Heart left ventricle (tissue), 16 donors: ENCODE measurements at regions of chr20 and their contacts with region 1.

Region 1: DNA sequence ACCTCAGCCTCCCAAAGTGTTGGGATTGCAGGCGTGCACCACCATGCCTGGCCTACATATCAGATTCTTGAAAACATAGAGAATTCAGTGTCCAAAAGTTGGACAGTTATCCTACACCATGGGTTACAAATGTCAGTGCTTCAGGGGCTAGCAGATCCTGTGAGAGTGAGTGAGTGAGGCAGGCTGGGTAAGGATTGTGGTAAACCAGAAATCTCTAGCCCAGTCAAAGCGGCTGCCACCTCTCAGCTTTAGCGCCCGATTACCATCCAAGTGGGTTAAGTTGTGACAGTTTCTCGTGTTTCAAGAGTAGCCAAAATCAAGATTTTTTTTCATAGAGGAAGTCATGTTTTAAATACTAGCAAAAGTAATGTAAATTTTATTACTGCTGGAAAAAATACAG is 21.9 kb upstream of the CSE1L start:
- DNase-seq: no peak
- ATAC-seq: no peak
- H3K4me3 ChIP-seq: no peak overlapping the region
- H3K27ac ChIP-seq: no peak overlapping the region
- H3K4me1 ChIP-seq: no peaks in the 10 kb centered on the region
- H3K27me3 ChIP-seq: no peaks in the 10 kb centered on the region
- CTCF ChIP-seq: no peak
- POLR2A ChIP-seq: no peak

Region 2: GRCh38 chr20:49063279-49063678 is 39.1 kb after region 1 on chr20:
- intact Hi-C with region 1: loop called in 1 of 10 experiments (anchors 2 kb)
- DNase-seq: no peak
- ATAC-seq: no peak
- H3K4me3 ChIP-seq: no peak overlapping the region
- H3K27ac ChIP-seq: no peak overlapping the region
- H3K4me1 ChIP-seq: no peaks in the 10 kb centered on the region
- H3K27me3 ChIP-seq: no peaks in the 10 kb centered on the region
- CTCF ChIP-seq: no peak
- POLR2A ChIP-seq: no peak